Activated T-helper 2 cell treated with anti-CD3 and anti-CD28 coated beads, Interferon-gamma antibody, Interleukin-2, Interleukin-4, amounts not matched to agents 10 μg/mL and 5 μg/mL and 100 μg/mL, durations not matched to agents 14 hours and 24 hours and 36 hours (primary cell): ENCODE measurements at regions of chr9 and their contacts with region 1.

Region 1: DNA sequence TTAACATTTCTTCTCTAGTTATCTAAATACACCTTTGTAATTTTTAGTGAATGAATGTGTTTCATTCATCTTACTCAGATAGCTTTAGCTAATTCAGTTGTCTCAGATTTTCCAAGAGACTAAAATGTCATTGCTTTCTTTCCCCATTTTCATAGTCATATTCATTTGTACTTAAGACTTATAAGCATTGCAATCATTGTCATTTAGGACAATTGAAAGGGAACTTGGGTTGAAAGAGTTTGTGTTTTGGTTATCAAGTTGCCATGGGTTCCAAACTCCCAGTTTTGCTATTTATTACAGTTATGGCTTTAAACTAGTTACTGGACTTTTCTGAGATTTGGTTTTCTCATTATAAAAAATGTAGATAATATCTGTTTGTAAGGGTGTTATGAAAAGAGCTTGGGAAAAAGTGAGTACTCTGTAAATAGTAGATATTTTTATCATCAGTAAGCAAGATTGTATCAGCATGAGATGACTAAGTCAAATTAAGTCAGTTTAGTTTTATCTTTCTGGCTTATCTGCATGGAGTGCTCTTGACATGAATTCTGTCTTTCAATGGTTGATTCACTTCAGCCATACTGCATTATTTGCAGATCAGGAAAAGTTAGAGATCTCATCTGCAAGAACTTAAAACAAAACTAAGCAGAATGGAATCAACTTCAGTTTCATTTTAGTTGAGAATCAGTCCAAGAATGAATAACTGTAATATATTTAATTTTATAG is 107.5 kb downstream of the PBX3 start:
- DNase-seq: no peak
- H3K4me3 Mint-ChIP-seq: no peak overlapping the region
- H3K27ac Mint-ChIP-seq: peak overlapping the region; percentile 55
- H3K4me1 Mint-ChIP-seq: peaks cover 22% of the 10 kb centered on the region
- H3K27me3 Mint-ChIP-seq: no peaks in the 10 kb centered on the region

Region 2: GRCh38 chr9:125521462-125522327 is 333.0 kb before region 1 on chr9:
- intact Hi-C with region 1: loop called (anchors 10 kb)
- DNase-seq: peak; percentile 24
- H3K4me3 Mint-ChIP-seq: peak overlapping the region; percentile 51
- H3K27ac Mint-ChIP-seq: peak overlapping the region; percentile 91
- H3K4me1 Mint-ChIP-seq: peaks cover 50% of the 10 kb centered on the region
- H3K27me3 Mint-ChIP-seq: no peaks in the 10 kb centered on the region

Region 3: DNA sequence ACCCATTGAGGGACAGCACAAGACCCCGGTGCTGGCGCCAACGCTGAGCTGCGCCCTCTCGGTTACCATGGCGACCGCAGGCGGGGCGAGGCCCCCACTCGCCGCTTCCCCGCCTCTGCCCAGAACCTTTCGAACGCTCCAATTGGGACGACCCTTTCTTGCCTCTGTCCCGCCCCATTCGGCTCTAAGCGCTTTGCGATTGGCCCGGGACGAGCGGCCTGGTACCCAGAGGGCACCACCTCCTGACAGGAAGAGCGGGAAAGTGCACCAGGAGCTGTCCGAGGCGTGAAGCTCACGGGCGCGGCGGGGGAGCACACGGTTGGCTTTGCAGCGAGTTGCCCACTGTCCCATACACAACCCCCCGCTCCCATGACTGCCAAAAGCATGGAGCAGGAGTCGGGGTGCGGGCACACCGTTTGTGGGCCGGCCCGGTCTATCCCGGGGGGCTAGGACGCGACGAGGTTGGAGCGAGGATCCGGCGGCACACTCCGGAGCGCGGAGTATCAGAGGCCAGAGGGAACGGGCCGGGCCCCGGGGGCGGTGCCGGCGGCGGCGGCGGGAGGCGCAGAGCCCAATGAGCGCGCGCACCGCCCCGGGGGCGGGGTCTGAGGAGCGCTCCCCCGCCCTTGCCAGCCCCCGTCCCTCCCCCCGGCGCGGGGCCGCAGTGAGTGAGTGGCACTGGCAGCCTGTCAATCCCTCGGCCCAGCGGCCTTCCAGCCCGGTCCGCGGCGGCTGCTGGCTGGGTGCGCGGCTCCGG is 108.5 kb before region 1 on chr9:
- intact Hi-C with region 1: loop called (anchors 5 kb)
- DNase-seq: peak; percentile 88
- H3K4me3 Mint-ChIP-seq: peak overlapping the region; percentile 80
- H3K27ac Mint-ChIP-seq: peak overlapping the region; percentile 95
- H3K4me1 Mint-ChIP-seq: peaks cover 40% of the 10 kb centered on the region
- H3K27me3 Mint-ChIP-seq: peaks cover 28% of the 10 kb centered on the region

Region 4: DNA sequence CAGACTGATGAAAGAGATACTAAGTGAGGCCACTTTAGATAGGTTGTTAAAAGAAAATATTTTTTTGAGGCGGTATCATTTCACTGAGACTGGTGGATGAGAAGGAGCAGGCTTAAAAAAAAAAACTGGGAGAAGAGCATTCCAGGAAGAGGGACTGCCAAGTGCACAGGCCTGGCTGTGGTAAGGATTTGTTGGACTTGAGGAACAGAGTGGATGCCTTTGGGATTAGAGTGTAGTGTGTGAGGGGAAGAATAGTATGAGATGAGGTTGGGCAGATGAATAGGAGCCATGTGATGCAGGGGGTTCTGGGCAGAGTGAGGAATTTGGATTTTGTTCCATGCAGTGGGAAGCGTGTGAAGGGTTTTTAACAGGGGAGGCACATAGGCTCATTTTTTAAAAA is 49.7 kb before region 1 on chr9:
- intact Hi-C with region 1: no loop called
- DNase-seq: no peak
- H3K4me3 Mint-ChIP-seq: no peak overlapping the region
- H3K27ac Mint-ChIP-seq: no peak overlapping the region
- H3K4me1 Mint-ChIP-seq: no peaks in the 10 kb centered on the region
- H3K27me3 Mint-ChIP-seq: no peaks in the 10 kb centered on the region

Region 5: DNA sequence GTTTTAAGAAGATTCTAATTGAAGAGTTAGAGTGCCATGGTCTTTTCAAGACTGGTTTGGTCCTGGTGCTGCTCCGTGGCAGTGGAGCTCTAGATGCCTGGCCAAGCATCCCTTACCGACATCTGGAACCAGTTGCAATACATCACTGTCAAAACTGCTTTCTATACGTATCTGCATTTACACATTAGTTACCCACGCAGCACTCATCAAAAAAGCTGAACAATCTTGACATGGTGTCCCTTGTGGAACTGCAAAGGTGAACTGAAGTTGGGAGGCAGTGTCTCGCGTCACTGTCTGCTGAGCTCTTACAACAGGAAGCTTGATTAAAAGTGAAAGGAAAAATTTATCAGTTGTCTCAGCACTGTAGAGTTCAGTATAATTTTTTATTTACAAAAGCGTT is 25.0 kb before region 1 on chr9:
- intact Hi-C with region 1: loop called (anchors 2 kb)
- DNase-seq: peak; percentile 35
- H3K4me3 Mint-ChIP-seq: peak overlapping the region; percentile 39
- H3K27ac Mint-ChIP-seq: no peak overlapping the region
- H3K4me1 Mint-ChIP-seq: peaks cover 17% of the 10 kb centered on the region
- H3K27me3 Mint-ChIP-seq: no peaks in the 10 kb centered on the region

Region 6: GRCh38 chr9:125878164-125878631 is 23.5 kb after region 1 on chr9:
- intact Hi-C with region 1: no loop called
- DNase-seq: no peak
- H3K4me3 Mint-ChIP-seq: no peak overlapping the region
- H3K27ac Mint-ChIP-seq: no peak overlapping the region
- H3K4me1 Mint-ChIP-seq: no peaks in the 10 kb centered on the region
- H3K27me3 Mint-ChIP-seq: peaks cover 11% of the 10 kb centered on the region

Region 7: DNA sequence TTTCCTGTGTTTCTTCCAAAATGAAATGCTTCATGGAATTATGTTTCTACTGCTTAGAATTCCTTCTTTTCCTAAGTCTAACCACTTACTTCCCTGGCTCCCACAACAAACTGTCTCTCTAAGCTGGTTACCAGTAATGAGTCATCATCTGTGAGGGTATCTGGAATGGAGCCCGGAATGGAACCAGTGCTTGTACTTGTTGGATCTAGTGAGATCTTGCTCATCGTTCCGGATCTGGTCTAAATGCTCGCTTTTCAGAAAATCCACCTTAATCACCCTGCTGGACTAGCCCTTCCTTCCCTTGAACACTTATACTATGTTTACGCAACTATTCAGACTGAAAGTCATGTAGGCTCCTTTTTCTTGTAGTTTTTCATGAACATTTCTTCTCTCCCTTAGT is 77.3 kb after region 1 on chr9:
- intact Hi-C with region 1: no loop called
- DNase-seq: no peak
- H3K4me3 Mint-ChIP-seq: no peak overlapping the region
- H3K27ac Mint-ChIP-seq: no peak overlapping the region
- H3K4me1 Mint-ChIP-seq: no peaks in the 10 kb centered on the region
- H3K27me3 Mint-ChIP-seq: no peaks in the 10 kb centered on the region

Region 8: GRCh38 chr9:126125177-126125972 is 270.7 kb after region 1 on chr9:
- intact Hi-C with region 1: no loop called
- DNase-seq: peak; percentile 3
- H3K4me3 Mint-ChIP-seq: no peak overlapping the region
- H3K27ac Mint-ChIP-seq: no peak overlapping the region
- H3K4me1 Mint-ChIP-seq: no peaks in the 10 kb centered on the region
- H3K27me3 Mint-ChIP-seq: peaks cover 10% of the 10 kb centered on the region